Activated naive CD4-positive, alpha-beta T cell treated with anti-CD3 and anti-CD28 coated beads for 36 hours (primary cell): ENCODE measurements at regions of chr6 and their contacts with region 1.

Region 1: DNA sequence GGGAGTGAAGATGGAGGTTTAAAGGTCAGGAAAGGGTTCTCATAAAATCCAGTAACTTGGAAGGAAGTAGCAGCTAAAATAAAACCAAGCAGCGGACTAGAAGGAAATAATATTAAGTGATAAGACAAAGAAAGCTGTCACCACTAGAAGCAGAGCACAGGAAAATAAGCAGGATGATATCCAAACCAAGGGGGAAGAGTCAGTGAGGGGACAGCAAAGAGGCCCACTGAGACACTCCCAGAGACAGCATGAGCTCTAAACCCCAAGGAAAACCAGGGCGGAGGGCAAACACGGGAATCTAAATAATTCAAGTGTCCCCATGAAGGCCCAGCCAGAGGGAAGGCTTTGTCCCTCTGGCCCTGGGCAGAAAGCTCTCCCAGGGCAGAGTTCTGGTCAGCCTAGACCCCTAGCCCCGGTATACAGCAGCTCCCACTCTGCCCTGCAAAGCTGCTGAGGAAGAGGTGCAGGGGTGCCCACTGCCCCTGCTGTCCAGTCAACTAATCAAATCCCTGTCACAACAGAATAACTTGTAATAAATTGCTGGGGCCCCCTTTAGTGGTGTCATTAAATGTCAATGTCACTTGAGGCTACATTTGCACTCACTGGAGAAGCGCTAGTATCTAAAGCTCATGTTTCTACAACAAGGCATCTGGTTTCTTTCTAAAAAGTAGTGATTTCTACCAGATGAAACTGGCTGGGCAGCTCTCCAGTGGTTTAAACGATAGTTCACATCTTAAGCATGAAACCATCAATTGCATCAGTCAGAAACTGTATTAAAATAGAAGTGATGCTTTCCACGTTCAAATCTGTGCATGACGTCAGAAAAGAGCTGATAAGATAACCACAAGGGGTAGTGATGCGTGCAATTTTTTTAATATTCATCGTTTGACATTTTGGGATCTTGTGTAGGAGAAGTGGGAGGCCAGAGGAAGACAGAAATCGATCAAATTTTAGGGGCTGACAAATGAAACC is 13.6 kb downstream of the PDE10A start:
- DNase-seq: no peak
- H3K4me3 Mint-ChIP-seq: no peak overlapping the region
- H3K27ac Mint-ChIP-seq: no peak overlapping the region
- H3K4me1 Mint-ChIP-seq: no peaks in the 10 kb centered on the region
- H3K27me3 Mint-ChIP-seq: no peaks in the 10 kb centered on the region

Region 2: GRCh38 chr6:165659945-165660862 is 10.8 kb after region 1 on chr6:
- CTCF ChIA-PET with region 1: no interaction called
- intact Hi-C with region 1: loop called (anchors 1 kb)
- DNase-seq: no peak
- H3K4me3 Mint-ChIP-seq: no peak overlapping the region
- H3K27ac Mint-ChIP-seq: no peak overlapping the region
- H3K4me1 Mint-ChIP-seq: peaks cover 8% of the 10 kb centered on the region
- H3K27me3 Mint-ChIP-seq: peaks cover 33% of the 10 kb centered on the region